MCF 10A (cell line): ENCODE measurements at regions of chr7 and their contacts with region 1.

Region 1: DNA sequence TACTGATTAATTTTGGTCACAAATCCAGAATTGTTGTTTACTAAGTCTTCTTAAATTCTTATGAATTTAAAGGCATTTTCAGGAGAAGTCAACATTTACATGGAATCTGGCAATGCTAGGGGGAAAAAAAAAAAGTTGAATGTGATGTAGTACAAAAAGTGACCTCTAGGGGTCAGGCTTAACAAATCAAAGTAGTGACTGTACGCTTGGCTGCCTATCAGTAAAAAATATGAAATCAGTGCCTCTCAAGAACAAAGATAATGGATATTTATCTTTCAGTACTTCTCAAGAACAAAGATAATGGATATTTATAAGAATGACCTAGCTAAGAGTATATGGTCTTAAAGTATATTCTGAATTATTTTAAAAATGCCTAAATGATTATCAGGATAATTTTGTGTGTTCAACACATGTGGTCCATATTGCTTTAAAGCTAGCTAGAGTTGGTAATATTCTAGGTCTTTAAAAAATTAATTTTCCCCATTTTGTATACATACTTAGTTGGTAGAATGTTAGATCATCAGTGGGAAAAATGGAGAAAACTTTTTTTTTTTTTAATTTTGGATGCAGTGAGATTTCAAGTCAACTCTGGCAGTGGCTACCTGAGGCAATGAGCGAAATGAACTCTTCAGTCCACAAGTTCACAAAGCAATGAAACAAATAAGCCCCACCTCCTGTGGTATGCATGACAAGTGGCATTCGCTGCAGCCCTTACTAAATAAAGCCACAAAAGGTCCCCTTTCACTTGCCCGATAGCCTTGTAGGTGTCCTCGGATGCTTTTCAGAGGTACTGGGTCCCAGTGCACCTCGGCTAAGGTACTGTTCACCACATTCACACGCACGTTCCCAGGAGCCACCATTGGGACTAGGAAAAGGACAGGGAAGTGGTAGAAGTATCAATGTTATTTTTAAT is 51.2 kb upstream of the LAMB4 start:
- DNase-seq: peak; percentile 67
- H3K4me3 Mint-ChIP-seq: no peak overlapping the region
- H3K27ac Mint-ChIP-seq: no peak overlapping the region
- H3K4me1 Mint-ChIP-seq: no peaks in the 10 kb centered on the region
- H3K27me3 Mint-ChIP-seq: peaks cover 18% of the 10 kb centered on the region
- CTCF ChIP-seq: peak; percentile 58

Region 2: GRCh38 chr7:108278281-108278680 is 97.0 kb after region 1 on chr7:
- CTCF ChIA-PET with region 1: no interaction called
- POLR2A ChIA-PET with region 1: no interaction called
- intact Hi-C with region 1: no loop called
- DNase-seq: no peak
- H3K4me3 Mint-ChIP-seq: no peak overlapping the region
- H3K27ac Mint-ChIP-seq: no peak overlapping the region
- H3K4me1 Mint-ChIP-seq: no peaks in the 10 kb centered on the region
- H3K27me3 Mint-ChIP-seq: no peaks in the 10 kb centered on the region
- CTCF ChIP-seq: no peak

Region 3: GRCh38 chr7:108452722-108453121 is 271.4 kb after region 1 on chr7:
- CTCF ChIA-PET with region 1: interaction called, 6 read pairs
- POLR2A ChIA-PET with region 1: no interaction called
- intact Hi-C with region 1: loop called (anchors 2 kb)
- DNase-seq: peak; percentile 51
- H3K4me3 Mint-ChIP-seq: no peak overlapping the region
- H3K27ac Mint-ChIP-seq: no peak overlapping the region
- H3K4me1 Mint-ChIP-seq: no peaks in the 10 kb centered on the region
- H3K27me3 Mint-ChIP-seq: peaks cover 39% of the 10 kb centered on the region
- CTCF ChIP-seq: peak; percentile 40

Region 4: GRCh38 chr7:108459931-108460551 is 278.7 kb after region 1 on chr7:
- CTCF ChIA-PET with region 1: interaction called, 9 read pairs
- POLR2A ChIA-PET with region 1: no interaction called
- intact Hi-C with region 1: loop called (anchors 1 kb)
- DNase-seq: peak; percentile 54
- H3K4me3 Mint-ChIP-seq: no peak overlapping the region
- H3K27ac Mint-ChIP-seq: no peak overlapping the region
- H3K4me1 Mint-ChIP-seq: no peaks in the 10 kb centered on the region
- H3K27me3 Mint-ChIP-seq: peaks cover 28% of the 10 kb centered on the region
- CTCF ChIP-seq: peak; percentile 58

Region 5: GRCh38 chr7:108592646-108593201 is 411.4 kb after region 1 on chr7:
- CTCF ChIA-PET with region 1: interaction called, 5 read pairs
- POLR2A ChIA-PET with region 1: no interaction called
- intact Hi-C with region 1: loop called (anchors 1 kb)
- DNase-seq: peak; percentile 11
- H3K4me3 Mint-ChIP-seq: no peak overlapping the region
- H3K27ac Mint-ChIP-seq: no peak overlapping the region
- H3K4me1 Mint-ChIP-seq: no peaks in the 10 kb centered on the region
- H3K27me3 Mint-ChIP-seq: no peaks in the 10 kb centered on the region
- CTCF ChIP-seq: no peak